IMR-90 (cell line): ENCODE measurements at regions of chr7 and their contacts with region 1.

Region 1: DNA sequence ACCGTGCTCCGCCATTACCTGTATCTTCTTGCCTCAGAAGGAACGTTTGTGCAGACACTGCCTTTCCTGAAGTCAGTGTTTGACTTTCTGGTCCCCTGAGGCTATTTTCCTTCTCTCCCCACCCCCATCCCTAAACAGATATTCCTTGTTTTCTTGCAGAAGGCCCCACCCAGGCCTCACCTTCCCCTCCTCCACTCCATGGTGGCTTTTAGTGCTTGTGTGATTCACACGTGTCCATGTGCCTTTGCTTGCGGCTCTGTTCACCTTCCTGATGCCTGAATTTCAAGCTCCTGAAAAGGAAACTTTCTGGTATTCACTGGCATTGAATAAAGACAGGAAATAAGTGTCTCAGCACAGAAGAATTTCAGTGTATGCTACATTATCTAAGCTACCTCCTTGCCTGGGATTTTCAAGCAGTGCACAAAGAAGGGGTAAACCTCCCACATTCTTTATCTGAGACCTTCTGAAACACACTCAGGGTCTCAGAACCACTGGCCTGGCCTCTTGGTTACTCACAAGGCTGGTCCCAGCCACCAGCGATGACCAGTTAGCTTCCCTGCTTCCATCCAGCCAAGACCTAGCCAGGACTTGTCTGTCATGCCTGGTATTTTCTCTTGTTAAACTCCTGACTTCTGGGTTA is 17.2 kb upstream of the UBE2H start:
- DNase-seq: peak; percentile 84
- ATAC-seq: peak; percentile 93
- H3K4me3 ChIP-seq: no peak overlapping the region
- H3K27ac ChIP-seq: peak overlapping the region; percentile 84
- H3K4me1 ChIP-seq: peaks cover 6% of the 10 kb centered on the region
- H3K27me3 ChIP-seq: no peaks in the 10 kb centered on the region
- CTCF ChIP-seq: no peak
- POLR2A ChIP-seq: no peak
- RAD21 ChIP-seq: no peak

Region 2: GRCh38 chr7:129502376-129502776 is 467.6 kb before region 1 on chr7 and contains the start of gene SMKR1:
- CTCF ChIA-PET with region 1: no interaction called
- POLR2A ChIA-PET with region 1: interaction called, 12 read pairs
- dilution Hi-C with region 1: no loop called
- in situ Hi-C with region 1: no loop called
- intact Hi-C with region 1: no loop called
- DNase-seq: peak; percentile 23
- ATAC-seq: peak; percentile 92
- H3K4me3 ChIP-seq: peak within 1 kb of the TSS; percentile 47
- H3K27ac ChIP-seq: no peak within 1 kb of the TSS
- H3K4me1 ChIP-seq: no peaks in the 10 kb centered on the region; the same call in 1 of the 2 replicates
- H3K27me3 ChIP-seq: peaks cover 38% of the 10 kb centered on the region
- CTCF ChIP-seq: no peak
- POLR2A ChIP-seq: no peak
- RAD21 ChIP-seq: no peak
- total RNA-seq, gene SMKR1: not detected in 2 replicates

Region 3: DNA sequence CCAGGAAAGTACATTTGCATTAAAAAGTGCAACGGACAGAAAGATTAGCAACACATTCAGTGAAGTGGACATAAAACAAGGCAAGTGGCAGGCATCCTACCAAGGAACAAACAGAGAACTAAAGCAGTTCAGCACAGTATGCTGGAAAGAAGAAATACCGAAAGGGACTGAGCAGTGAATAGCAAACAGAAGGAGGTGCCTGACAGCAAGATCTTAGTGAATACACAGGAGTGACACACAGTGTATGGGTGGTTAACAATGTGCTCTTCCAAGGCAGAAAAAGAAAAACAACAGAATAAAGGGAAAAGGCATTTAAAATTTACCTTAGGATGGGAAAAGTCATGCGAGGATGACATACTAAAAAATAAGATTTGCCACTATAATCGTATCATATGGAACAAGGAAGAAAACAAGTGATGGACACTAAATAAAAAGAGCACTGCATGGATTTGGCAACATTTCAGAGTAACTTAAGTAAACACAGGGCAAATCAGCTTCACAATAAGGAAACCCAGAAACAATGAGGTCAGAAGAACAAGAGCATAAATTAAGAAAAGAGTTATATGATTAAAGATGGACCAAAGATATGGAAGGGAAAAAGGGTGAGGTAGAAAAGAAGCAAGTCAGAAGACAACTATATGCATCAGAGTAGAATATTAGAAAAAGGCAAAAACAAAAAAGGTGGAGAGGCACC is 551.5 kb after region 1 on chr7:
- CTCF ChIA-PET with region 1: no interaction called
- POLR2A ChIA-PET with region 1: no interaction called
- dilution Hi-C with region 1: no loop called
- in situ Hi-C with region 1: no loop called
- intact Hi-C with region 1: no loop called
- DNase-seq: no peak
- ATAC-seq: no peak
- H3K4me3 ChIP-seq: no peak overlapping the region
- H3K27ac ChIP-seq: no peak overlapping the region
- H3K4me1 ChIP-seq: no peaks in the 10 kb centered on the region
- H3K27me3 ChIP-seq: no peaks in the 10 kb centered on the region
- CTCF ChIP-seq: no peak
- POLR2A ChIP-seq: no peak
- RAD21 ChIP-seq: no peak